HEK293 (cell line): ENCODE measurements at regions of chr6 and their contacts with region 1.

Region 1: GRCh38 chr6:29016559-29017427 is 11.7 kb upstream of the ZNF311 start:
- H3K4me3 ChIP-seq: peak overlapping the region; percentile 75
- H3K27ac ChIP-seq: peak overlapping the region; percentile 55
- H3K4me1 ChIP-seq: no peaks in the 10 kb centered on the region
- CTCF ChIP-seq: peak; percentile 88

Region 2: DNA sequence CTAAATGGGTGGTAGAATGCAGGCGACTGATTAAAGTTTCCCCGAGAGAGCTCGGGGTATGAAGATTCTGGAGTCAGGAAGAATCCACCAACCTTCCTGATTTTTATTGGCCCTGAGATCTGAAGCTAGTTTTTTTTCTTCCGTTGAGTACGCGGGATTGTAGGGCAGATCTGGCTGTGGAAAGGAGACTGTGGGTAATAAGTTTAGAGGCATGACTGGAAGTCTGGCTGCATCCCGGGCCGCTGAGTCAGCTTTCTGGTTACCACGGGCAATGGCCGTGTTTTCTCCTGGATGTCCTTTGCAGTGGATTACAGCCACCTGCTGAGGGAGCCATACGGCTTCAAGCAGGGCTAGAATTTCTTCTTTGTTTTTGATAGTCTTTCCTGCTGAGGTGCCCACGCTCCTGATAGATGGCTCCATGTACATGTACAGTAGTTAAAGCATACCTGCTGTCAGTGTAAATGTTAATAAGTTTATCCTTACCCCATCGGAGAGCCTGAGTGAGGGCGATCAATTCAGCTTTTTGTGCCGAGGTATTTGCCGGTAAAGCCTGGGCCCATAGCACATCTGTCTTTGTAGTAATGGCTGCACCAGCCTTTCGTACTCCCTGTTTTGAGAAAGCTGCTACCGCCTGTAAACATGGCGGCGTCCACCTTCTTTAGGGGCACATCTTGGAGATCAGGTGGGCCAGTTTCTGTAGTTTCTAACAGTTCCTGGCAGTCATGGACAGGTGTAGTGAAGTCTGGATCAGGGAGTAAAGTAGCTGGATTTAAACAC is 247.0 kb before region 1 on chr6:
- CTCF ChIA-PET with region 1: interaction called, 11 read pairs
- POLR2A ChIA-PET with region 1: no interaction called
- H3K4me3 ChIP-seq: no peak overlapping the region
- H3K27ac ChIP-seq: no peak overlapping the region
- H3K4me1 ChIP-seq: peaks cover 8% of the 10 kb centered on the region
- CTCF ChIP-seq: 0 out of 2 replicates have a peak, but pooled peaks have one; percentile 57

Region 3: DNA sequence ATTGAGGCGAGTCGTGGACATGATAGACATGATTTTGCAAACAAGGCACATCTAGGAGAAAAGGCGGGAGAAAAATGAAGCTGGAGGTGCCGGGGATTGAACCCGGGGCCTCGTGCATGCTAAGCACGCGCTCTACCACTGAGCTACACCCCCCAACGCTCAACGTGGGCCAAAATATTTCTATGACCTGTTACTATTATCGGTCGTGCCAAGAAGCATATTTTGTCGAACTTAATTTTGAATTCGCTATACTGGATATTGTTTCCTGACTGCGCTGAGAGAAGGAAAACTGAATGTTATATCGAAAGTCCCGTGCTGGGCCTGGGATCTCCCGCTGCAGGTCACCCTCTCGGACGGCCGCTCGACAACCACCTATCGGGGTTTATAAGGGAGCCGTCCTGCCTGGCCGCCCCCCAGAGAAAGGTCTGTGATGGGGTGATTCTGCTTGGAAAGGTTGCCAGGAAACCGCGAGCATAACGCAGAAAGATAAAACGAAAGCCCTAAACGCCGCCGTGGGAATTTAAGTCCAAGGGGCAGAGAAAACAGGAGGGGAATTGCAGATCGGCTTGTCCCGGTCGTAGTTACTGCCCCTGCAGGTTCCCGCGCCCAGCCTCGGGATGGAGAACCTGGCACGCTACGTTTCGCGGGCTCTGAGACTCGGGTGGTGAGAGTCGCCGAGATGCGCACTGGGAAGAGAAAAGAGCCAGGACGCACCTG is 153.0 kb before region 1 on chr6:
- CTCF ChIA-PET with region 1: interaction called, 11 read pairs
- POLR2A ChIA-PET with region 1: no interaction called
- H3K4me3 ChIP-seq: peak overlapping the region; percentile 77
- H3K27ac ChIP-seq: peak overlapping the region; percentile 60; the same call in 1 of the 2 replicates
- H3K4me1 ChIP-seq: no peaks in the 10 kb centered on the region
- CTCF ChIP-seq: peak; percentile 70

Region 4: DNA sequence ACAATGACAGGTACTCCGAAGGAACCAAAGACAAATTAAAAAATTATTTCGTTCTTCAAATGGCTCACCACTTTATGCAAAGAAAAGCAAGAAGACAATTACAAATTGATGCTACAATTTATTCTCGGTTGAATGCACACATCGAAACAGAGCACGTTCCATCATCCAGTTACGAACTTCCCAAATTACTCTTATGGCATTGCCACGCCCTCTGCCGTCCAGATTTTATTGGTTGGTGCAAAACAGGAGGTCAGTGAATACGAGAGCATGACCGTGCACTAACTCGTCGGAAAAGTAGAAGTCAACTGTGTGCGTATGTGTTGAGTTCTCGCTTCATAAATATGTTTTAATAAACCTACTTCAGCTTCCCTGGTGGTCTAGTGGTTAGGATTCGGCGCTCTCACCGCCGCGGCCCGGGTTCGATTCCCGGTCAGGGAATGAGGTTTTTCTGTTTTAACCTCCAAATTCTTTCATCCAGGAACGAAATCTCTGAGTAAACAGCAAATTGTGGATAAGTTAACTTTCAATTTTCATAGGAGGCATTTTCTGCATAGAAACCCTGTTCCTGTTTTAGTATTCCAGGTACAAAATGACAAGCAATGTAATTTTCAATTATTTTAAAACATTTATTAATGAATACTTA is 34.8 kb before region 1 on chr6:
- CTCF ChIA-PET with region 1: interaction called, 19 read pairs
- POLR2A ChIA-PET with region 1: interaction called, 20 read pairs
- H3K4me3 ChIP-seq: peak overlapping the region; percentile 73
- H3K27ac ChIP-seq: no peak overlapping the region
- H3K4me1 ChIP-seq: peaks cover 5% of the 10 kb centered on the region; the same call in 1 of the 2 replicates
- CTCF ChIP-seq: peak; percentile 50; the same call in 1 of the 2 replicates

Region 5: GRCh38 chr6:29005183-29005885 is 11.5 kb before region 1 on chr6 and contains the start of gene ZNF311:
- CTCF ChIA-PET with region 1: interaction called, 14 read pairs
- POLR2A ChIA-PET with region 1: no interaction called
- H3K4me3 ChIP-seq: no peak within 1 kb of the TSS
- H3K27ac ChIP-seq: no peak within 1 kb of the TSS
- H3K4me1 ChIP-seq: no peaks in the 10 kb centered on the region
- CTCF ChIP-seq: no peak